ENCODE measurements at regions of chr3 and their contacts with region 1.

Region 1: GRCh38 chr3:149771652-149772271 is 19.5 kb upstream of the COMMD2 start:
- DNase-seq: peak; percentile 56
- H3K4me3 Mint-ChIP-seq: no peak overlapping the region
- H3K27ac Mint-ChIP-seq: no peak overlapping the region
- H3K4me1 Mint-ChIP-seq: no peaks in the 10 kb centered on the region
- H3K27me3 Mint-ChIP-seq: no peaks in the 10 kb centered on the region
- CTCF ChIP-seq: peak; percentile 81

Region 2: GRCh38 chr3:149489060-149489690 is 282.6 kb before region 1 on chr3:
- CTCF ChIA-PET with region 1: interaction called, 11 read pairs
- POLR2A ChIA-PET with region 1: no interaction called
- intact Hi-C with region 1: loop called (anchors 1 kb)
- DNase-seq: peak; percentile 25
- H3K4me3 Mint-ChIP-seq: no peak overlapping the region
- H3K27ac Mint-ChIP-seq: no peak overlapping the region
- H3K4me1 Mint-ChIP-seq: no peaks in the 10 kb centered on the region
- H3K27me3 Mint-ChIP-seq: peaks cover 15% of the 10 kb centered on the region
- CTCF ChIP-seq: peak; percentile 45

Region 3: GRCh38 chr3:149512209-149512782 is 259.5 kb before region 1 on chr3:
- CTCF ChIA-PET with region 1: interaction called, 32 read pairs
- POLR2A ChIA-PET with region 1: no interaction called
- intact Hi-C with region 1: loop called (anchors 1 kb)
- DNase-seq: peak; percentile 67
- H3K4me3 Mint-ChIP-seq: no peak overlapping the region
- H3K27ac Mint-ChIP-seq: no peak overlapping the region
- H3K4me1 Mint-ChIP-seq: peaks cover 19% of the 10 kb centered on the region
- H3K27me3 Mint-ChIP-seq: no peaks in the 10 kb centered on the region
- CTCF ChIP-seq: peak; percentile 61

Region 4: DNA sequence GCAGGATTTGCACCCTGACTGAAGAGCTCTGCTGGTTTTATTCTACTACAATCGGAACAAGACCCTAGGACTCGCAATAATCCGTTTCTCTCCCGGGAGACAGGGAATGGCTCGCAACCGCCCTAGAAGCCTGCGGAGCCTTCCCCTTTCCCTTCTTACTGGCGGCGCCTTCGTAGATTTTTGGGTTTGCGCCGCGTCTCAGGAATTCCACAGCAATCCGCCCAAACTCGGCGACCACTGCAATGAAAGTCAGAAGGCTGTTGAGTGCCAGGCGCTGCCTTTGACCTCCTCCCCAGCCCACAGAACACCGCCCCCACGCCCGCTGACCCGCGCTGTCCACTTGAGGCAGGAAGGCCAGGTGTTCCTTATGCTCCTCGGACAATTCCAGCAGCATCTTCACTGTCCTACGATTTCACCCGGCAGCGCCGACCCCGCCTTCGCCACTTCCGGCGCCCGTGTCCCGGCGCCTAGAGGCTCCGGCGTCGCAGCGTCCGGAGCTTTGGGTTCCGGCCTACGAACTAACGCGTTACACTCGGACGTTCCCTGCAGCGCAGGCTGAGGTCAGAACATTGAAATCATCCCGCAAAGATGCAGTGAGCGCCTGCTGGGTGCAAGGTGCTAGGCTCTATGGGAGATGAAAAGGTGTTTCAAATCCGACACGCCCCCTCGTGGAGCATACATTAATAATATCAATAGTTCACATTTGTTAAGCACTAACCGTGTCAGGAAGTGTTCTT is 19.5 kb before region 1 on chr3 and contains the start of gene COMMD2:
- CTCF ChIA-PET with region 1: interaction called, 29 read pairs
- POLR2A ChIA-PET with region 1: interaction called, 30 read pairs
- intact Hi-C with region 1: no loop called
- DNase-seq: peak; percentile 91
- H3K4me3 Mint-ChIP-seq: peak within 1 kb of the TSS; percentile 84
- H3K27ac Mint-ChIP-seq: peak within 1 kb of the TSS; percentile 87
- H3K4me1 Mint-ChIP-seq: peaks cover 3% of the 10 kb centered on the region
- H3K27me3 Mint-ChIP-seq: no peaks in the 10 kb centered on the region
- CTCF ChIP-seq: peak; percentile 34
- total RNA-seq, gene COMMD2: 51.2 and 60.4 TPM in 2 replicates

Region 5: GRCh38 chr3:149879872-149880271 is 108.1 kb after region 1 on chr3:
- CTCF ChIA-PET with region 1: interaction called, 11 read pairs
- POLR2A ChIA-PET with region 1: no interaction called
- intact Hi-C with region 1: no loop called
- DNase-seq: peak; percentile 67
- H3K4me3 Mint-ChIP-seq: no peak overlapping the region
- H3K27ac Mint-ChIP-seq: no peak overlapping the region
- H3K4me1 Mint-ChIP-seq: no peaks in the 10 kb centered on the region
- H3K27me3 Mint-ChIP-seq: no peaks in the 10 kb centered on the region
- CTCF ChIP-seq: peak; percentile 48

Region 6: DNA sequence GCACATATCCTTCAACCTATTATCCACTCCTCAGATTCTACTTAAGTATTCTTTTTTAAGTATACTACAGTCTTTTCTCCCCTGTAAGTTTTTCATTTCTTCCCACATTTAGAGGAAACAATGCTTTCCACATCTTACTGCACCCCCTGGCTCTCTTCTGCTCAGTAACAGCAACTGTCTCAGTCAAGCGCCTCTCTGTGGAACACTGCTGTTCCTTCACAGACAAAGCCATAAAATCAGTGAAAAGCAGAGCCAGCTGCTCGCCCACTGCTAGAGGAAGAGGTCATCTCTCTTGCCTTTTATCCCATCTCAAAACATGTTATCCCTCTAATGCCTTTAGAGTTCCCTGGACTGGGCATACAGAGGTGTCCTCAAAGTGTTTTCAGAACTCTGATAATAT is 749.7 kb after region 1 on chr3:
- CTCF ChIA-PET with region 1: no interaction called
- POLR2A ChIA-PET with region 1: no interaction called
- intact Hi-C with region 1: no loop called
- DNase-seq: no peak
- H3K4me3 Mint-ChIP-seq: no peak overlapping the region
- H3K27ac Mint-ChIP-seq: no peak overlapping the region
- H3K4me1 Mint-ChIP-seq: peaks cover 13% of the 10 kb centered on the region
- H3K27me3 Mint-ChIP-seq: no peaks in the 10 kb centered on the region
- CTCF ChIP-seq: no peak